ENCODE measurements at regions of chr7 and their contacts with region 1.

Region 1: GRCh38 chr7:102412548-102412947 is 16.4 kb downstream of the PRKRIP1 start:
- DNase-seq: peak; percentile 60
- H3K4me3 Mint-ChIP-seq: no peak overlapping the region
- H3K27ac Mint-ChIP-seq: no peak overlapping the region
- H3K4me1 Mint-ChIP-seq: peaks cover 55% of the 10 kb centered on the region
- H3K27me3 Mint-ChIP-seq: no peaks in the 10 kb centered on the region

Region 2: GRCh38 chr7:102264367-102264891 is 148.1 kb before region 1 on chr7:
- CTCF ChIA-PET with region 1: no interaction called
- POLR2A ChIA-PET with region 1: no interaction called
- DNase-seq: no peak
- H3K4me3 Mint-ChIP-seq: no peak overlapping the region
- H3K27ac Mint-ChIP-seq: no peak overlapping the region
- H3K4me1 Mint-ChIP-seq: no peaks in the 10 kb centered on the region
- H3K27me3 Mint-ChIP-seq: no peaks in the 10 kb centered on the region

Region 3: DNA sequence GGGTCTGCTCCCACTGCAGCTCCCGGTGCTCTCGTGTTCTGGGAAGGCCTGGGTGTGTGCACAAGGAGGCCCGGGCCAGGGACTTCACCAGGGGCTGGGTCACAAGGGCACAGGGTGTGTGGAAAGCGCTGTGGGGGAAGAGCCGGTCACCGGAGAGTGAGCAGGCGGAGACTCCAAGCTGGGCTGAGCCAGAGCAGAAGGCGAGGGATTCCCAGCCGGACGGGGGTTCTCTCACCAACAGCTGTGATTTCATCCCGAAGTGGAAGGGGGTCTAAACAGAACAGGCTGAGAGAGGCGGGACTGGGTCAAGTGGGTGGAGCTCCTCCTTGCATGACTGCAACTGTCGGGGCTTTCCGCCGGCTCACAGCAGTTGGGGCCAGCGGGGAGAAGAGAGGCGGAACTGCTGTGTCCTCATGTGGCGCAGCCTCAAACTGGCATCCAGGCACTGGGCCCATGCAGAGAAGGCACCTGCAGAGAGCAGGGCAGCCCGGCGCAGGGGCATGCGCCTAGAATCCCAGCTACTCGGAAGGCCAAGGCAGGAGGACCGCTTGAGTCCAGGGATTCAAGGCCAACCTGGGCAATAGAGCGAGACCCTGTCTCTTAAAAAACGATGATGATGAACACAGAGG is 13.2 kb after region 1 on chr7:
- CTCF ChIA-PET with region 1: interaction called, 20 read pairs
- POLR2A ChIA-PET with region 1: interaction called, 10 read pairs
- DNase-seq: peak; percentile 80
- H3K4me3 Mint-ChIP-seq: peak overlapping the region; percentile 81
- H3K27ac Mint-ChIP-seq: peak overlapping the region; percentile 100
- H3K4me1 Mint-ChIP-seq: peaks cover 80% of the 10 kb centered on the region
- H3K27me3 Mint-ChIP-seq: no peaks in the 10 kb centered on the region

Region 4: DNA sequence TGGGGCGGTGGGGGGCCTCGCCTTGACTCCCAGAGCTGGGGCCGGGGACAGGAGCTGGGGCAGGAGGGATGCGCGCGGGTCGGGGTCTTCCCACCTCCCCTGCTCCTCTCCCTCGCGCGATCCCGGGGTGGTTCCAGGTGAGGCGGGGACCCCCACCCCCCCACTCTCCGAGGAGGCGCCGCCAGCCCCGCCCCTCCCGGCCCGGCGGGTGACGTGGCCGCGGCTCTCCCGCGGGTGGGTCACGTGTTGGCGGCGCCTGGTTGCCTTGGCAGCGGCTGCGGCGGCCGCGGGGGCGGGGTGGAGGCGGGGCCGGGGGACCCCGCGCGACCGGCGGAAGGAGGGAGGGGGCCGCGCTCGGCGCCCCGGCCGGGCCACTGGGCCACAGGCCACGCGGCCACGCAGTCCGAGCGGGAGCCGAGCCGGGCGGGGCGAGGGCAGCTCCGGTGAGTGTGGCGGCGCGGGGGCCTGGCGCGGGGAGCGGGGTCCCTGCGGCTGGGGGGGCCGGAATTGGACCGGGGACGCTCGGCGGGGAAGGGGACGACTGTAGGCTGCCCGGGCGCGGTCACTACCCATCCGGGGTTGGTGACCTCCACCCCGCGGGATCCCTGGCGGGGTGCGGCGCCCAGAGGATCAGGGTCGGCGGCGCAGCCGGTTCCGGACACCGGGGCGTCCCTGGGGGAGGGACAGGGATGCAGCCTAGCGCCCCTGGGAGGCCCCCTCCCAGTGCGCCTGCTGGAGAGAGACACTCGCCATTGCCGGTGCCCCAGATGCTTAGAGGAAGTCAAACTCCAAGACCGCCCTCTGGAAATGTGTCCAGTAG is 20.9 kb after region 1 on chr7 and contains the start of gene ORAI2:
- CTCF ChIA-PET with region 1: interaction called, 20 read pairs
- POLR2A ChIA-PET with region 1: interaction called, 6 read pairs
- DNase-seq: peak; percentile 85
- H3K4me3 Mint-ChIP-seq: peak within 1 kb of the TSS; percentile 82
- H3K27ac Mint-ChIP-seq: peak within 1 kb of the TSS; percentile 94
- H3K4me1 Mint-ChIP-seq: peaks cover 57% of the 10 kb centered on the region
- H3K27me3 Mint-ChIP-seq: no peaks in the 10 kb centered on the region
- total RNA-seq, gene ORAI2: 61.2 to 63.7 TPM